ENCODE measurements at regions of chr6 and their contacts with region 1.

Region 1: GRCh38 chr6:57316581-57317059 is 810 bp upstream of the PRIM2 start:
- DNase-seq: peak; percentile 62 to 91 (median 81)
- ATAC-seq: peak; percentile 86
- H3K4me3 ChIP-seq: peak overlapping the region; percentile 58 to 74
- H3K4me3 Mint-ChIP-seq: peak overlapping the region; percentile 99
- H3K27ac ChIP-seq: peak overlapping the region; percentile 55 to 61
- H3K27ac Mint-ChIP-seq: peak overlapping the region; percentile 96
- H3K4me1 ChIP-seq: peaks cover 10% of the 10 kb centered on the region
- H3K4me1 Mint-ChIP-seq: peaks cover 32% of the 10 kb centered on the region
- H3K27me3 ChIP-seq: no peaks in the 10 kb centered on the region
- H3K27me3 Mint-ChIP-seq: no peaks in the 10 kb centered on the region
- CTCF ChIP-seq: peak; percentile 91

Region 2: GRCh38 chr6:55557146-55557545 is 1759.5 kb before region 1 on chr6:
- CTCF ChIA-PET with region 1: no interaction called
- POLR2A ChIA-PET with region 1: no interaction called
- intact Hi-C with region 1: no loop called
- DNase-seq: no peak
- ATAC-seq: no peak
- H3K4me3 ChIP-seq: no peak overlapping the region
- H3K4me3 Mint-ChIP-seq: no peak overlapping the region
- H3K27ac ChIP-seq: no peak overlapping the region
- H3K27ac Mint-ChIP-seq: no peak overlapping the region
- H3K4me1 ChIP-seq: no peaks in the 10 kb centered on the region
- H3K4me1 Mint-ChIP-seq: no peaks in the 10 kb centered on the region
- H3K27me3 ChIP-seq: no peaks in the 10 kb centered on the region
- H3K27me3 Mint-ChIP-seq: no peaks in the 10 kb centered on the region
- CTCF ChIP-seq: no peak

Region 3: DNA sequence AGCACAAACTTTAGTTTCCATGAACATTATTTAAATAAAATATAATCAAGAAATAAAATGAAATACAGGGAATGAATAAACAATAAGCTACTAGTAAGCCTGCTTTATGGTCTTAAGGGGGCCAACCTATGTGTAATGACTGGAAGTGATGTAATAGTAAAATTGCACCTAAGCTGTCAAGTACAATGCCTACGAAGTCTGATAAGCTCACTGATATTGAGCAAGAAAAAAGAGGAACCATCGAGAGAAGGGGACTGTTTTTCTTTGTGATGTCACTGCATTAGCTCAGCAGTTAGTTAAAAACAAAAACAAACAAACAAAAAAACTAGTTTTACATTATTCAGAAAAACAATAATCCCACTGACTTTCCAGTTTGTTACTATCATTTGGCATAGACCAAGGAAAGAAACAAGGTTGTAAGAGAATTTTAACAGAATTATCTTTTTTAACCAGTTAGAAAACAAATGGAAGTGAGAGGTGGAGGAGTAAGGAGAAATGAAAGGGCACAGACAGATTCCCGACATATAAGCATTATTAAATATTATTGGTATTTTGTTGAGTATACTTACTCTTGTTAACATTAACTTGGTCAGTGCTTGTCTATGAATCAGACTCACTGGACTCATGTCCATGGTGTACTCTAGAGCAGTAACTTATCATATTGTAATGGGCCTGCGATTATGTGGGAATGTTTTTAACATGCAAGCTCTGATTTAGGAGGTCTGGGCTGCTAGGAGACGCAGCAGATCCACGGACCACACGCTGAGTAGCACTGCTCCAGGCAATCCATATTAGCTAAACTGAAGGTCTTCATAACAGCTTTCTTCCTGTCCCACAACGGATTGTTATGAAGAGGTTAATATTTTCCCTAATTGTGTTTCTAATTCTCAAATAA is 1638.0 kb before region 1 on chr6:
- CTCF ChIA-PET with region 1: no interaction called
- POLR2A ChIA-PET with region 1: no interaction called
- intact Hi-C with region 1: no loop called
- DNase-seq: no peak
- ATAC-seq: no peak
- H3K4me3 ChIP-seq: no peak overlapping the region
- H3K4me3 Mint-ChIP-seq: no peak overlapping the region
- H3K27ac ChIP-seq: no peak overlapping the region
- H3K27ac Mint-ChIP-seq: no peak overlapping the region
- H3K4me1 ChIP-seq: no peaks in the 10 kb centered on the region
- H3K4me1 Mint-ChIP-seq: no peaks in the 10 kb centered on the region
- H3K27me3 ChIP-seq: no peaks in the 10 kb centered on the region
- H3K27me3 Mint-ChIP-seq: no peaks in the 10 kb centered on the region
- CTCF ChIP-seq: no peak

Region 4: DNA sequence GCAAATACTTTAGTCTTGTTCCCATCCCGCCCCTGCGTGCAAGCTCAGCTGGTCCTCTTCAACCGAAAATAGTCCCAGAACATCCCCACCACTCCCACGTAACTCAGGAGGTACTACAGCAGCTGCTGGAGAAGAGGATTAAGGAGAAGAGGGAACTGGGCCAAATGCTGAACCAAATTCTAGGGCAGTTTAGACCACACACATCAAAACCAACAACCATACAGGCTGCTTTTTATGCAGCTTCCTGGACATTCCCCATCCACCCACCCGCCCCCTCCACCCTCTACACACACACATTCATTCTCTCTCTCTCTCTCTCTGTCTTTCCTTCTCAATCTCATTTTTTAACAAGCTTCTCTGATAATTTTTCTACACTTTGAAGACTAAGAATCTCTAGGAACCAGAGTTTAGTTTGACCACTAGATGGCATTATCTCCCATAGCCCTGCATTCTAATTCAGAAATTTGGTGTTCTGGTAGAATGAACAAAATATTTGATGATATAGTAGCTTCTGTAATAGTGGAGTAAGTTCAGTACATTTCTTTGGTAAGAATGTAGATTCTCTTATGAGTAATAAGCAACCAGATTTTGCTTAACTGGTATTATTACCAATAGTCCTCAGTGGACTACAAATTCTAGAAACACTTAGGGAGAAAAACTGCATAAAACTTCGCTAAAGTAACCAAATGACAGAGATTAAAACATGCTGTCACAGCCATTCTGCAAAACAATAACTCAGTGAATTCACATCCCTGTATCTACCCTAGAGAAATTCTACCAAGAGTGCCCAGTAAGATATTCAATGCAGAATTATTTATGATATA is 413.8 kb before region 1 on chr6:
- CTCF ChIA-PET with region 1: interaction called, 143 read pairs
- POLR2A ChIA-PET with region 1: interaction called, 6 read pairs
- intact Hi-C with region 1: loop called (anchors 1 kb)
- DNase-seq: peak in 2 of 9 experiments; percentile 44 to 59
- ATAC-seq: no peak
- H3K4me3 ChIP-seq: no peak overlapping the region
- H3K4me3 Mint-ChIP-seq: no peak overlapping the region
- H3K27ac ChIP-seq: no peak overlapping the region
- H3K27ac Mint-ChIP-seq: no peak overlapping the region
- H3K4me1 ChIP-seq: no peaks in the 10 kb centered on the region
- H3K4me1 Mint-ChIP-seq: no peaks in the 10 kb centered on the region
- H3K27me3 ChIP-seq: no peaks in the 10 kb centered on the region
- H3K27me3 Mint-ChIP-seq: peaks cover 7% of the 10 kb centered on the region
- CTCF ChIP-seq: peak; percentile 59

Region 5: DNA sequence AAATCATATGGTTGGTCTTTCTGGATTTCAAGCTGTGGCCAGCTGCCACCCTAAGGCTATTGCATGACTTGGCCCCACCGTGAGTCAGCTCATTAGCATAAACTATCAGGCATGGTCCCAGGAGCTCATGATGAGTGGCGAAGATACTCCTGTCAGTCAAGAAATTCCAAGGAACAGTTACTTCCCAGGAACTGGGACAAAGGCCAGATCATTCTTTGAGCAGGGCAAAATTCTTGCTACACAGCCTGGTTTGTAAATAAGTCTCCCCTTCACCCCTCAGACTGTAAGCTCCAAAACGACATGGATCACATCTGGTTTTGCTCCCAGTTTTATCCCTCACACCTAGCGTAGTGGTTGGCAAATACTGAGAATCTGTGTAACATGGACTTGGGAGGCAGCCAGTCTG is 303.1 kb before region 1 on chr6:
- CTCF ChIA-PET with region 1: interaction called, 3 read pairs
- POLR2A ChIA-PET with region 1: no interaction called
- intact Hi-C with region 1: loop called in 1 of 2 experiments (anchors 10 kb)
- DNase-seq: no peak
- ATAC-seq: no peak
- H3K4me3 ChIP-seq: no peak overlapping the region
- H3K4me3 Mint-ChIP-seq: no peak overlapping the region
- H3K27ac ChIP-seq: no peak overlapping the region
- H3K27ac Mint-ChIP-seq: no peak overlapping the region
- H3K4me1 ChIP-seq: no peaks in the 10 kb centered on the region
- H3K4me1 Mint-ChIP-seq: no peaks in the 10 kb centered on the region
- H3K27me3 ChIP-seq: no peaks in the 10 kb centered on the region
- H3K27me3 Mint-ChIP-seq: peaks cover 3% of the 10 kb centered on the region
- CTCF ChIP-seq: no peak

Region 6: DNA sequence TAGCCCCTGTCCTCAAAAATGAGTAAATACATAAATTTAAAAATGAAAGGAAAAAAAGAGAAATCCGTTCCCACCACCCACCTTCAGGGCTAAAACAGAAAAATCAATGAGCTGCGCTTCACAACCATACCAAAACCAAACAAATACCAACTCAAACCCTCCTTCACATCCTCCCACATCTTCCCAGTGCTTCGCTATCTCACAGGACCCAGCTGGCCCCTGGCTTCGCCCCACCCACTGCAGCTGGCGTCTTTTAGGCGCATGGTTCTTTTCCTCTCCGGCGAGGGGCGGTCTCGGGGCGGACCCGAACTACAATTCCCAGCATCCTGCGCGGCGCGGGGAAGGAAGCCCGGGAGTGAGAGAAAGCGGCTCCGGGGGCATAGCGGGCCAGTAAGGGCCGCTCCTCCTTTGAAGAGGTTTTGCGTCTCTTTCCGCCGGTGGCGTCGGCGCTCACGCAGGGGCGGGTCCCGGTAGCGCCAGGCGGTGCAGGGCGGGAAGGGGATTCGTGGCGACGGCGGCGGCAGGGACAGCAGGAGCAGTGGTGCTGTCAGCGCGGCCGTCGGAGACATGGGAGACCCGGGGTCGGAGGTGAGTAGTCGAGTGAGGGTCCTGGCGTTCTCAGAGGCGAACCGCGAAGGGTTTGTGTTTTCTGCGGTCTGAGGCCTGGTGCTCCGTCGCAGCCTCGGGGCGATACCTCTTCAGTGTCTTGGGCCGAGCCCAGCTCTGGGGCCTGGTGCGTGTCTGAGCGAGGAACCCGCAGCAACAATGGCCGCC is 226.7 kb before region 1 on chr6 and contains the start of gene ZNF451:
- CTCF ChIA-PET with region 1: no interaction called
- POLR2A ChIA-PET with region 1: no interaction called
- intact Hi-C with region 1: loop called (anchors 1 to 5 kb)
- DNase-seq: peak; percentile 92 to 98 (median 96)
- ATAC-seq: peak; percentile 91
- H3K4me3 ChIP-seq: peak within 1 kb of the TSS; percentile 59 to 82
- H3K4me3 Mint-ChIP-seq: peak within 1 kb of the TSS; percentile 90
- H3K27ac ChIP-seq: peak within 1 kb of the TSS; percentile 56 to 74
- H3K27ac Mint-ChIP-seq: peak within 1 kb of the TSS; percentile 93
- H3K4me1 ChIP-seq: peaks cover 36% of the 10 kb centered on the region
- H3K4me1 Mint-ChIP-seq: peaks cover 36% of the 10 kb centered on the region
- H3K27me3 ChIP-seq: no peaks in the 10 kb centered on the region
- H3K27me3 Mint-ChIP-seq: no peaks in the 10 kb centered on the region
- CTCF ChIP-seq: no peak
- total RNA-seq, gene ZNF451: 132 to 136 TPM

Region 7: DNA sequence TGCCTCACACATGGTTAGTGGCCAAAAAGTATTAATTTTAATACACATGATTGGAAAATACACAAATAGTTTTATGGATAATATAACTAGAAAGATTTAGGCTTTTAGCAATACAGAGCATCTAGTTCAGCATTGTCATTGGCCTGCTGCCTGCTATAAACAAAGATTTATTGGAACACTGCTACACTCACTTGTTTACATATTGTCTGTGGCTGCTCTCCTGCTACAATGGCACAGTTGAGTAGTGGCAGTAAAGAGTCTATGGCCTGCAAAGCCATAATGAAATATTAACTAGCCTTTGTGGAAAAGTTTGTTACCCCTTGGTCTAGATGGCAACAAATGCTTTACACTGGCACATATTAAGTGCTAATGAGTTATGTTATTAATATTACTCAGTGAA is 188.9 kb before region 1 on chr6:
- CTCF ChIA-PET with region 1: no interaction called
- POLR2A ChIA-PET with region 1: no interaction called
- intact Hi-C with region 1: no loop called
- DNase-seq: no peak
- ATAC-seq: no peak
- H3K4me3 ChIP-seq: no peak overlapping the region
- H3K4me3 Mint-ChIP-seq: no peak overlapping the region
- H3K27ac ChIP-seq: no peak overlapping the region
- H3K27ac Mint-ChIP-seq: no peak overlapping the region
- H3K4me1 ChIP-seq: no peaks in the 10 kb centered on the region
- H3K4me1 Mint-ChIP-seq: peaks cover 4% of the 10 kb centered on the region
- H3K27me3 ChIP-seq: no peaks in the 10 kb centered on the region
- H3K27me3 Mint-ChIP-seq: no peaks in the 10 kb centered on the region
- CTCF ChIP-seq: no peak

Region 8: GRCh38 chr6:57221936-57222742 is 94.5 kb before region 1 on chr6 and contains the start of gene RAB23:
- CTCF ChIA-PET with region 1: interaction called, 4 read pairs
- POLR2A ChIA-PET with region 1: no interaction called
- intact Hi-C with region 1: loop called (anchors 1 to 5 kb)
- DNase-seq: peak; percentile 66 to 92 (median 81)
- ATAC-seq: peak; percentile 90
- H3K4me3 ChIP-seq: peak within 1 kb of the TSS; percentile 88 to 94
- H3K4me3 Mint-ChIP-seq: peak within 1 kb of the TSS; percentile 97
- H3K27ac ChIP-seq: peak within 1 kb of the TSS in 1 of 2 experiments; percentile 35
- H3K27ac Mint-ChIP-seq: peak within 1 kb of the TSS; percentile 72
- H3K4me1 ChIP-seq: peaks cover 4% of the 10 kb centered on the region
- H3K4me1 Mint-ChIP-seq: peaks cover 11% of the 10 kb centered on the region
- H3K27me3 ChIP-seq: peaks cover 5 to 9% of the 10 kb centered on the region in 2 experiments
- H3K27me3 Mint-ChIP-seq: peaks cover 20% of the 10 kb centered on the region
- CTCF ChIP-seq: no peak
- total RNA-seq, gene RAB23: 0.08 TPM

Region 9: DNA sequence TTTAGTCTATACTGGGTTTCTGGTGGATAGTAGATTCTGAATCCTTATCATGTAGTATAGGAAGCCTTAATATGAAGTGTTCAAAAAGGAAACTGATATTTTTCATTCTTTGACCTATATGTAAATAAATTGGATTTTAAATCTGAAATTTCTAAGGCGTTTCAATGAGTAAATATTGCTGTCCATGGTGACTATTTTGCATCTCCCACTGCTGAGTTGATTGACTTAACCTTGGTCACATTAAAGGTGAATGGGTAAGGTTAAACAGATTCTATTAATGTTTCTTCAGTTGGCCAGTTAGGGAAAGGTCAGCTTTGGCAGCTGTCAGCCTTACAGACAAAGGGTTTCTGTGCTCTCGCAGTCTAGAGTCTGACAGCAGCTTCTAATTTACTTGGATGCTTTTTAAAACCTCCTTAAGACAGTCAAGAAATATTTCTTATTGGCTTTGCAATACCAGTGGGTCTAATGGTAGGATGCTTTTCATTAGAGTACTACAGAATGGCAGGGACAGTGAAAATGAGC is 25.6 kb after region 1 on chr6:
- CTCF ChIA-PET with region 1: no interaction called
- POLR2A ChIA-PET with region 1: no interaction called
- intact Hi-C with region 1: no loop called
- DNase-seq: no peak
- ATAC-seq: no peak
- H3K4me3 ChIP-seq: no peak overlapping the region
- H3K4me3 Mint-ChIP-seq: no peak overlapping the region
- H3K27ac ChIP-seq: no peak overlapping the region
- H3K27ac Mint-ChIP-seq: no peak overlapping the region
- H3K4me1 ChIP-seq: no peaks in the 10 kb centered on the region
- H3K4me1 Mint-ChIP-seq: peaks cover 4% of the 10 kb centered on the region
- H3K27me3 ChIP-seq: no peaks in the 10 kb centered on the region
- H3K27me3 Mint-ChIP-seq: no peaks in the 10 kb centered on the region
- CTCF ChIP-seq: no peak